ENCODE measurements at regions of chr6 and their contacts with region 1.

Region 1: GRCh38 chr6:28693751-28694443 is 168.2 kb downstream of the GPX5 start:
- H3K4me3 ChIP-seq: no peak overlapping the region
- H3K27ac ChIP-seq: no peak overlapping the region
- H3K4me1 ChIP-seq: no peaks in the 10 kb centered on the region
- CTCF ChIP-seq: no peak

Region 2: DNA sequence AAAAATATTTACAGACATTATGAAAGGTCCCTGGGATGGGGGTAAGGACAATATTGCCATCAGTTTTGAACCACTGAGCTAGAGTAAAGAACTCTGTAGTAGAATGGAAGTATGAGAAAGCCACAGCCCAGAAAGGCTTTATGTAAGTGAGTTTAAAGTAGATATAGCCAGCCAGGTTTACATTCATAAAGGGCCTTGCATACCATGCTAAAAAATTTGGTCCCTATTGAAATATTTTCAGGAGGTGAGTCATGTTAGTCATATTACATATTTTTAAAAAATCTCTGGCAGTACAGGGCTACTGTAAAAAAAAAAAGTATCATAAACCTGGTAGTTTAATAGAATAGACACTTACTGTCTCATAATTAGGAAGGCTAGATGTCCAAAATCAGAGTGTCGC is 548.7 kb before region 1 on chr6:
- CTCF ChIA-PET with region 1: interaction called, 12 read pairs
- POLR2A ChIA-PET with region 1: no interaction called
- H3K4me3 ChIP-seq: no peak overlapping the region
- H3K27ac ChIP-seq: no peak overlapping the region
- H3K4me1 ChIP-seq: peaks cover 2% of the 10 kb centered on the region; the same call in 1 of the 2 replicates
- CTCF ChIP-seq: no peak

Measured in HEK293 (cell line).